Aorta (tissue), 5 donors: ENCODE measurements at regions of chr11 and their contacts with region 1.

Region 1: DNA sequence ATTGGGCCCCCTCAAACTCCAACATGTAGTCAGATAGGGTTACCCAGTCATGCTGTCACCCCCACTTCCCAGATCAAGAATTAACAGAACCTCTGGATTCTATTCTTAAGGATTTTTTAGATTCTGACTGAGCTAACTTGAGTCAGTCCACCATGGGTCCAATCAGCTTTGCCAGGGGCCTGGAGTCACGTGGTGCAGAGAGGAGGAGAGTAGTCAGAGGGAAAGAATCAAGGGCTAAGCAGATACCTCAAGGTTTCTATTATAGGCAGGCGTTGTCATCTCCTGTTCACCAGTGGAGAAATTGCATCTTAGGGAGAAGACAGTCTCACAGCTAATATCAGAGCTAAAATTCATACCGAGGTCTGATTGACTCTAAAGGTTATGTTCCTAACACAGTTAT is 28.2 kb downstream of the FZD4 start:
- DNase-seq: no peak
- ATAC-seq: peak; percentile 42
- H3K4me3 ChIP-seq: no peak overlapping the region
- H3K27ac ChIP-seq: no peak overlapping the region
- H3K4me1 ChIP-seq: peaks cover 10% of the 10 kb centered on the region in 2 donors
- H3K27me3 ChIP-seq: no peaks in the 10 kb centered on the region

Region 2: GRCh38 chr11:86644291-86644690 is 282.7 kb before region 1 on chr11:
- intact Hi-C with region 1: loop called in 1 of 2 experiments (anchors 5 kb)
- DNase-seq: no peak
- ATAC-seq: no peak
- H3K4me3 ChIP-seq: no peak overlapping the region
- H3K27ac ChIP-seq: no peak overlapping the region
- H3K4me1 ChIP-seq: peaks cover 4 to 5% of the 10 kb centered on the region in 2 donors
- H3K27me3 ChIP-seq: no peaks in the 10 kb centered on the region

Region 3: GRCh38 chr11:86869966-86870570 is 56.9 kb before region 1 on chr11:
- intact Hi-C with region 1: no loop called
- DNase-seq: peak; percentile 75 to 80
- ATAC-seq: peak; percentile 90
- H3K4me3 ChIP-seq: no peak overlapping the region
- H3K27ac ChIP-seq: no peak overlapping the region
- H3K4me1 ChIP-seq: peaks cover 3 to 4% of the 10 kb centered on the region in 2 donors
- H3K27me3 ChIP-seq: no peaks in the 10 kb centered on the region

Region 4: DNA sequence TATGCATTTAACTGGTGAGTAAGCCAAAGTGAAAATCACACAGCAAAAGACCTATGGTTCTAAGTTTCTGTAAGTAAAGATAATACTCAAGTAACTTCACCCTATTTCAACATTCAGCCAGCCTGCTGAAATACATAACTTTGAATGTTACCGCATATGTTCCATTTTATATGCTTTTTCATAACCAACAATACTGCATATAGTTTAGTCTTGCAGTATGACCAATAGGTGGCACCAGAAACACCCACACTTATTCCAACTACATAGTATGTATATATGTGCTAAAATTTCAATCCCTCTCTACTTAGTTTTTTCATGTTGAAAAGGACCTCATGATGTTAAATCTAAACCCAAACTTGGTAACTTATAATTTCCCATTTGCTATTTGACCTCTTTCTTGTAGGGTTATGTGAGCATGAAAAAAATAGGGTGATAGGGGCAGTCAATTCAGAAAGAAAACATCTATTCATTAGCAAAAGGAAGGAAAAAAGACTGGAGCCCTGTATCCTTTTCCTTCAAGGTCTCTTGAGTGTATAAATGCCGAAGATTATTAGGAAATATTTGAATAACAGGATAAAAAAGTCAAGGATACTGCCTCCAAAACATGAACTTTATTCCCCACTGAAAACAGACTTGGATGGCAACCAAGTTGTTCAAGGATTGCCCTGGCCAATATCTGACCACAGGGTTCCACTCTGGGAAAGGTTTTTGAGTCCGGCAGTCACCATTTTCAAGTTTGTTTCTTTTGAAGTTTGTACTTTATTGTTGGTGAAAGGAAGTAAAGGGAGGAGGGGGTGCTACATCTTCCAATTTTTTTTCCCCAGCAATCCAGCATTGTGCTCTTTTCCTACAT is 52.0 kb after region 1 on chr11:
- intact Hi-C with region 1: no loop called
- DNase-seq: no peak
- ATAC-seq: peak; percentile 26
- H3K4me3 ChIP-seq: no peak overlapping the region
- H3K27ac ChIP-seq: no peak overlapping the region
- H3K4me1 ChIP-seq: peaks cover 0 to 4% of the 10 kb centered on the region in 2 donors
- H3K27me3 ChIP-seq: no peaks in the 10 kb centered on the region